WTC11 (cell line): ENCODE measurements at regions of chr2 and their contacts with region 1.

Region 1: DNA sequence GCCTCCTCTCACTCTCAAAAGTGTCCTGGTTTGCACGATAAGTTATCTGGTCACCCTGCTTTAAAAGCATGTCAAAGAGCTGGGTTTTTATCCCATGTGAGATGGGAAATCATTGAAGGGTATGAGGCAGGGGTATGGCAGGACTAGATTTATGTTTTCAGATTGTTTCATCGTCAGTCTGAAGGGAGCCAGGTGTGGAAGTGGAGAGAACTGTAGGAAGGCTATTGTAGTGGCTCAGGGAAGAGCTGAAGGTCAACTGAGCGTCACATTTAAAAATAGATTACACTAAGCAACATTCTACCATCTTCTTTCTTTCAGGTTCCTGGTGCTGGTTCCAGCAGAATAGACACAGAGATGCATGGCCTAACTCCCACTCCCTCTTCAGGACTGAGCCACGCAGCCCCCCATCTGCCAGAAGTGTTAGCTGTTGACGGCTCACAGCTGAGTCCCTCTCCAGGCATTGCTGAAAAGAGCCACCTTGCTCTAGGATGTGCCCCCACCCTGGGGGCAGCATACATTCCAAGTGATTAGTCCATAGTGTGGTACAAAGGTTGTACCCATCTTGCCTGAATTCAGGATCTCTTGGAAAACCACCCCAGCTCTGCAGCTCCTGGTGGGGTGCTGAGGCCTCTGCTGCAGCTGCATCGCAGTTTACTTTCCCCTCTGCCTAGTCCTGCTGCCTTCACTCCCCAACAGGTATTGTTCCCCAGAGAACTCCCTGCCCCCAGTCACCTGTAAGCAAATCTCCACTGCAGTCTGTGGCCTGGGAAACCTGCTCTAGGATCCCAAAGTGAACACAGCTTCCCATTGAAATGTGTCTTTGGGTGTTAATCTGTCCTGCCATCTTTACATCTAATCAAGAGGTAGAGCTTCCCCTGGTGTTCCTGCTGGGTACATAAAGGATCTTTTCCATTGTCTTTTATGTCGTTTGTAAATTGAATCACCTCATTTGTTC is 79.5 kb upstream of the KLF7 start:
- DNase-seq: peak; percentile 14
- ATAC-seq: peak; percentile 89
- H3K4me3 Mint-ChIP-seq: no peak overlapping the region
- H3K27ac Mint-ChIP-seq: peak overlapping the region; percentile 8; the same call in 1 of the 2 replicates
- H3K4me1 Mint-ChIP-seq: peaks cover 20% of the 10 kb centered on the region
- H3K27me3 Mint-ChIP-seq: no peaks in the 10 kb centered on the region
- CTCF ChIP-seq: no peak

Region 2: GRCh38 chr2:207227062-207227748 is 18.0 kb before region 1 on chr2:
- CTCF ChIA-PET with region 1: interaction called, 11 read pairs
- POLR2A ChIA-PET with region 1: interaction called, 3 read pairs
- DNase-seq: peak; percentile 71
- ATAC-seq: peak; percentile 75
- H3K4me3 Mint-ChIP-seq: peak overlapping the region; percentile 58
- H3K27ac Mint-ChIP-seq: peak overlapping the region; percentile 94
- H3K4me1 Mint-ChIP-seq: peaks cover 77% of the 10 kb centered on the region
- H3K27me3 Mint-ChIP-seq: peaks cover 22% of the 10 kb centered on the region
- CTCF ChIP-seq: no peak